ENCODE measurements at regions of chr5 and their contacts with region 1.

Region 1: GRCh38 chr5:141816598-141817372 is 61.4 kb downstream of the PCDH1 start:
- DNase-seq: peak; percentile 81
- H3K4me3 ChIP-seq: no peak overlapping the region
- H3K27ac ChIP-seq: peak overlapping the region; percentile 74
- H3K4me1 ChIP-seq: peaks cover 24% of the 10 kb centered on the region
- H3K27me3 ChIP-seq: no peaks in the 10 kb centered on the region
- CTCF ChIP-seq: no peak
- POLR2A ChIP-seq: no peak

Region 2: DNA sequence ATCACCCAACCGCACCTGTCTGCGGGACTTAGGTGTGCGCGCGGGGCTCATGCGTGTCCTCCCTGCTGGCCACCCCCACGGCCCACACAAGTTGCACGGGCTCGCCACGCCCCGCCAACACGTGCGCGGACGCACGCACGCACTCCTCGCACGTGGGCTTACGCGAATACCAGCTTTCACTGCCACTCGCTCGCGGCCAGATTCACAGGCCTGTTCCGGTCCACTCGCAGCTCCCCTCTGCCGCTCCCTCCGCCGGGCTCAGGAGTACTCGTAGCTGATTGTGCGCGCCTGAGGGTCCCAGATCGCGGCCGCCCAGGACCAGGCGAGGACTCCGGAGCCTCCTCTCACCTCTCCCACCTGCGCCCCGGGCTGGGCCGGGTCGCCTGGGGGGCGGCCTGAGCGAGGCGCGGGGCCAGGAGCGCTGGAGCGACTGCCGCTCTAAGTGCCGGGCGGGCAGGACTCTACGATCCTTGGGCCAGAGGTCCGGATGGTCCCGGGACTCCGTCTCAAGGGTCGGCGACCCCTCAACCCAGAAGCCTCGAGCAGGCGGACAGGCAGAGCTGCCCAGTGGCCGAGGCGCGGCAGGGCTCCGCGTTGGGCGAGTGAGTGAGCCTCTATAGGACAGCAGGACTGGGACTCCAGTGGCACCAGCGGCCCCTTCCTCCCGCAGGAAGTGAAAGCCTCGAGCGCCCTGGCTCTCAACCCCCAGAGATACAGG is 324.5 kb before region 1 on chr5:
- CTCF ChIA-PET with region 1: no interaction called
- POLR2A ChIA-PET with region 1: no interaction called
- dilution Hi-C with region 1: no loop called
- intact Hi-C with region 1: no loop called
- DNase-seq: no peak
- H3K4me3 ChIP-seq: no peak overlapping the region
- H3K27ac ChIP-seq: no peak overlapping the region
- H3K4me1 ChIP-seq: no peaks in the 10 kb centered on the region
- H3K27me3 ChIP-seq: peaks cover 10 to 25% of the 10 kb centered on the region in 2 experiments
- CTCF ChIP-seq: no peak
- POLR2A ChIP-seq: no peak

Region 3: DNA sequence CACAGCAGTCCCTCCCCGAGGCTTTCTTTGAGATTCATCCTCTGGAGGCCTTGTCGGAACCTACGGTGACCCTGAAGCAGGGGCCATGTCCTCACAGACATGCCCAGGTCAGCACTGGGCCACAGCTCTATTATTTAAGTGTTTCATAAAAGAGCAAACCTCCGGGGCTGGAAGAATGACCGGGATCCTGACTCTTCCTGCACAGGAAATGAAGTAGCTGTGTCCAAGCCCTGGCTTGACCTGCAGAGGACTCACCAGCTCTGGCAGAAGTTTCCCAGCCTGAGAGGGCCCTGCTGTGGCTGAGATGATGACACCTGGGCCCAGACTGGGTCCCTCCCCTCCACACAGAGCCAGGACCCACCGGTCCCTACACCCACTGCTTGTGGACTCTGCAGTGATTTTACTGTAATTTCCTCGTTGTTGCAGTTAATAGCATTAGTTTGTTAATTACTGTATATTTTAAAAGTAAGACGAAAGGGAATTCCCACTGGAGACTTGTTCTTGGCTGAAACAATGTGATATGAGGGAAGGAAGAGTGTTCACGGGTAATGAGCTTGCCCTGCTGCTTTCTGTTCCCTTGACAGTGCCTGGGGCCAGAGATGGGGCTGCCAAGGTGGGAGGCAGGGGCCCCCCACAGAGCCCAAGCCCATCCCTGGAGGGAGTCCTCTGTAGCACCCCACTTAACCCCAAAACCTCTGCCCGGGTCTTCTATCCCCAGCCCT is 10.8 kb before region 1 on chr5:
- CTCF ChIA-PET with region 1: interaction called, 11 read pairs
- POLR2A ChIA-PET with region 1: interaction called, 6 read pairs
- dilution Hi-C with region 1: no loop called
- intact Hi-C with region 1: loop called (anchors 1 kb)
- DNase-seq: peak; percentile 86
- H3K4me3 ChIP-seq: no peak overlapping the region
- H3K27ac ChIP-seq: peak overlapping the region; percentile 81
- H3K4me1 ChIP-seq: peaks cover 25% of the 10 kb centered on the region
- H3K27me3 ChIP-seq: peaks cover 0 to 1% of the 10 kb centered on the region in 2 experiments
- CTCF ChIP-seq: no peak
- POLR2A ChIP-seq: no peak

Region 4: DNA sequence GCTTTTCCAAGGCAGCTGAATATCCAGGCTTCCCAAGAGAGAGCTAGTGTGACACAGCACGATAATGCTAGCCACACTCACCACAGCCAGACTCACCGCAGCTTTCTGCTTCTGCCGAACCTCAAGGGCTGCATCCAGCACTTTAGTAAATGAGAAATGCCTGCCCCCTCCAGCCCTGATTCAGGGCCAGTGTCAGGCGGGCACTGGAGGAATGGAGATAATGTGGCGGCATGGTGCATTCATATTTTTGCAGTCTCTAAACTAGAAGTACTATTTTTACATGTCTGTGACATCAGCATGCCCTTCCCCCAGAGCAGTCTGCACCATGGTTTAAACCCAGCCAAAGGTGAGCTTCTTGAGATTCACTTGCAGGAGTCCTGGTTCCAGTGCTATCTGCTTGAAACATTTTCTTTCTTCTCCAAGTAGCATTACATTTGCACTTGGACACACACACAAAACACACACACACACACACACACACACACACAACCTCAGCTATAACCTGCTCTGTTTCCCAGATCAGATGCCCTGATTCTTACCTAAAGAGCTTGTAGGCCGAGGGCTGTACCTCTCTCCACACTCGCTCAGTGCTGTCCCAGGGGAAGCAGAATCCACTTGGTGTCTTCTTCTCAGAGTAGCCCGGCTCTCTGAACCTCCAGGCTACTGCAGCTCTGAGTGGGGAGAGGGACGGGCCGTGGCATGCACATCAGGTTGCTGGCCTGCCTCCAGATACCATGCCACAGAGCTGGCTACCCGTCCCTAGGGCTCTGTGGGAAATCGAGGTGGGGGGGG is 868.8 kb after region 1 on chr5 and contains the start of gene FGF1:
- CTCF ChIA-PET with region 1: no interaction called
- POLR2A ChIA-PET with region 1: no interaction called
- dilution Hi-C with region 1: no loop called
- intact Hi-C with region 1: no loop called
- DNase-seq: no peak
- H3K4me3 ChIP-seq: no peak within 1 kb of the TSS
- H3K27ac ChIP-seq: no peak within 1 kb of the TSS
- H3K4me1 ChIP-seq: peaks cover 7% of the 10 kb centered on the region
- H3K27me3 ChIP-seq: peaks cover 17 to 23% of the 10 kb centered on the region in 2 experiments
- CTCF ChIP-seq: no peak
- POLR2A ChIP-seq: no peak
- total RNA-seq, gene FGF1: not detected in 2 replicates

Measured in endothelial cell of umbilical vein (primary cell).